Pancreas (tissue), 10 donors: ENCODE measurements at regions of chr6 and their contacts with region 1.

Region 1: GRCh38 chr6:3124667-3125066 is 6.2 kb downstream of the BPHL start:
- DNase-seq: no peak
- ATAC-seq: no peak
- H3K4me3 ChIP-seq: no peak overlapping the region
- H3K27ac ChIP-seq: no peak overlapping the region
- H3K4me1 ChIP-seq: peaks cover 0 to 10% (median 8%) of the 10 kb centered on the region in 3 donors
- H3K27me3 ChIP-seq: no peaks in the 10 kb centered on the region
- CTCF ChIP-seq: no peak

Region 2: DNA sequence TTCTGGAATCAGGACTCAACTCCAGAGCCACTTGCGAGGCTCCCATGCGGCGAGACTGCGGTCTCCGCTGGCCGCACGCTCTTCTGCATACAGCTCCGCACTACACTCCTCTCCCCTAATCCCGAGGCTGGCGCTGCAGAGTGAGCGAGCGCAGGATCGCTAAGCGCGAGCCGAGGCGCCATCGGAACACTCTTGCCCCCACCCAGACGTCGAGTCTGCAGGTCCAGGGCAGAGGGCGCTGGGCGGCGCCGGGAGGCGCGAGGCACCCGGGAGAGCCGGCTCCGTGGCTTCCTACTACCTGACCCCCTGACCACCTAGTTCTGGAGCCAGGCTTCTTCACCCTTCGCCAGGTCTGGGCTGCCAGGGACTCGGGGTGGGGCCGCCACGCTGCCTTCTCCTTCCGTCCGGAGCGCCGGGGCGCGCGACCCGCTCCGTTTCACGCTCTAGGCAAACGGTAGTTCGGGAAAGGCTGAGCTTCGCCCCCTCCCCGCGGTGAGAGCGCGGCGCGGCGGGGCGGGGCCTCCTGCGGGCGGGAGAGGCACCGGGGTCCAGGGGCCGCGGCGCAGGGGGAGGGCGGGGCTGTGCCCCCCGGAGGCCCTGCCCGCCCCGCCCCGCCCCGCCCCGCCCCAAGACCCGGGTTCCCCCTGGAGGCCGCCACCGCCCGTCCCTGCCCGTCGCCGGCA is 38.0 kb after region 1 on chr6:
- intact Hi-C with region 1: loop called in 1 of 3 experiments (anchors 5 kb)
- DNase-seq: peak; percentile 74 to 89 (median 78)
- ATAC-seq: peak; percentile 52 to 80 (median 76)
- H3K4me3 ChIP-seq: peak overlapping the region; percentile 24 to 74 (median 70)
- H3K27ac ChIP-seq: peak overlapping the region; percentile 89 to 95 (median 92)
- H3K4me1 ChIP-seq: peaks cover 0 to 16% (median 10%) of the 10 kb centered on the region in 3 donors
- H3K27me3 ChIP-seq: no peaks in the 10 kb centered on the region
- CTCF ChIP-seq: no peak

Region 3: DNA sequence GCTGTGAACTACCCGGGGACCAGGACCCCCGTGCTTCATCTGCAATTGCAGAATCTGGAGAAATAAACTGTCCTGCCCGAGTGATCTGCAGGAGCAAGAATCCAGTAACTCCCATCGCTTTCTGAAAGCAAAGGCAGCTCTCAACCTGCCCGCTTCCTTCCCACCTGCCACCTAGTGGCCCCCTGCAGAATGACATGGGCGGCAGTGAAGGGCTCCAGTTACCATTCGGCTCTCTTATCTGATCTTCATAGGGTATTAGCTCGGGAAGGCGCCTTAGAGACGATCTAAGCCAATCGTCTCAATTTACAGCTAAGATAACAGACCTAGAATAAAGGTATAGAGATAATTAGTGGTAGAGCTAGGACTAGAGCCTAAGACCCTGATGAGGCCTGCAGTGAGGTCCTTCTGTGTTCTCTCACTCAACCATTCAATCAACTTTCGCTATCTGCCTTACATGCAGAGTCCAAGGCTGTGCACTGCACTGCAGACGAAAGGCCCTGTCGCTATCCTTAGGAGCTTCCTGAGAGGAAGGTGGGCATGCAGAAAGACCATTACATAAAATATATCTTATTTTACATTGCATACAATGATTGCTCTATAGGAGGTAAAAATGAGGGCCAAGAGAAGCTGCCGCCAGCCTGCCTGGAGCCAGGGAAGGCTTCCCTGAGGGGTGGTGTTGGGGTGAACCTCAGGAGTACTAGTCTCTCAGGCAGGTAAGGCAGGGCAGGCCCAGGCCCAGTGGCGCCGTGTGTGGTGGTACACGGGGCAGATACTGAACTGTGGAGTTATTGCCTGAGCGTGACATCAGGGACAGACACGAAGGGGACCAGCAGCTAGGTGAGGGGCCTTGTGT is 127.0 kb after region 1 on chr6:
- intact Hi-C with region 1: loop called in 2 of 3 experiments (anchors 5 kb)
- DNase-seq: peak; percentile 72 to 94 (median 88)
- ATAC-seq: peak; percentile 86 to 96 (median 95)
- H3K4me3 ChIP-seq: peak overlapping the region in 1 of 4 donors; percentile 3
- H3K27ac ChIP-seq: no peak overlapping the region
- H3K4me1 ChIP-seq: no peaks in the 10 kb centered on the region
- H3K27me3 ChIP-seq: no peaks in the 10 kb centered on the region
- CTCF ChIP-seq: peak; percentile 92 to 98 (median 96)